IMR-90 (cell line): ENCODE measurements at regions of chr12 and their contacts with region 1.

Region 1: DNA sequence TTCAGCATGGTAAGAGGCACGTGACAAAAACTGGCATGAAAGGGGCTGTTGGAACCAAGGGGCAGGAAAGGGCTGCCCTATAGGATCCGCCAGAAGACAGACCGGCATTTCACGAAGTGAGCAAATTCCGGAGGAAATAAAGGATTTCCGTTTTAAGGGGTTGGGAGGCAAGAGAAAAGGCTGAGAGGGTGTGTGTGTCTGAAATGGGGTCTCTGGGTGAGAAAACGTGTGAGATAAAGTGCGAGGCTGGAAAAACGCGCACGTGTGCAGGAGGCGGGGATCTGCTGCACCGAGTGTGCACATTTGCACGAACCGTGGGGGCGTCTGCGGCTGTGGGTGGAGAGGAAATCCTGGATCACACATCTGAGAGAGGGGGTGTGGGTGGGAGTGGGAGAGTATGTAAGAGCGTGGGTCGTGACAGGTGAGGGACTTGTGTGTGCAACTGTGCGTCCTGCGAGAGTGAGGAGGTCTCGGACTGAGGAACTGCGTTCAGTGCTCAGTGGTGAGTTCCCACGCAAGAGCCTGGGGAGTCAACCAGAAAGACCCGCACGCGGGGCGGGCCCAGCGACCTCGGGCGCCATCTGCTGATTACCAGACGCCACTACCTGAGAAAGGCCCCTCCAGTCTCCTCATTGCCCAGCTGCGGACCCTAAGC is 37.0 kb upstream of the P2RX7 start:
- DNase-seq: peak; percentile 35
- ATAC-seq: peak; percentile 99
- H3K4me3 ChIP-seq: peak overlapping the region; percentile 24; the same call in 1 of the 2 replicates
- H3K27ac ChIP-seq: no peak overlapping the region
- H3K4me1 ChIP-seq: peaks cover 2% of the 10 kb centered on the region; the same call in 1 of the 2 replicates
- H3K27me3 ChIP-seq: peaks cover 15% of the 10 kb centered on the region
- CTCF ChIP-seq: peak; percentile 74
- POLR2A ChIP-seq: no peak
- RAD21 ChIP-seq: peak; percentile 66

Region 2: DNA sequence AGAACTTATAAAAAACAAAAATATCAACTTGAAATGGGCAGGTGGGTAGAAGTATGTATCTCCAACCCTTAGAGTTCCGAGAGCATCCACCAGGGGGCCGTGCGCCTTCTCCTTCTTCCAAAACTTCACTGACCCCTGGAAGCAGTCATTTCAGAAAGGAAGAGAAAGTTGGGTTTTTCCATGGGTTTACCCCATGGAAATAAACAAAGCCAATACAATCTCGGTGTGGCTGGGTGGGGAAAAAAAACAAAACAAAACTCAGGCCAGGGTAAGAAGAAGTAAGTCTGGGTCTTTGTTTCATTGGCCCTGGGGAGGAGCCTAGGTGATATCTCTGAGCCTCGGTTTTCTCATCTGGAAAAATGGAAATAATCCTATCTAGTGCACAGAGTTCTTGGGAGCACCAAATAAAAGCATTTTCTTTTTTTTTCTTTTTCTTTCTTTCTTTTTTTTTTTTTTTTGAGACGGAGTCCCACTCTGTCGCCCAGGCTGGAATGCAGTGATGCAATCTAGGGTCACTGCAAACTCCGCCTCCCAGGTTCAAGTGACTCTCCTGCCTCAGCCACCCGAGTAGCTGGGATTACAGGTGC is 150.9 kb before region 1 on chr12:
- CTCF ChIA-PET with region 1: no interaction called
- POLR2A ChIA-PET with region 1: no interaction called
- dilution Hi-C with region 1: no loop called
- in situ Hi-C with region 1: no loop called
- intact Hi-C with region 1: loop called (anchors 5 kb)
- DNase-seq: peak; percentile 18
- ATAC-seq: peak; percentile 71
- H3K4me3 ChIP-seq: no peak overlapping the region
- H3K27ac ChIP-seq: no peak overlapping the region
- H3K4me1 ChIP-seq: no peaks in the 10 kb centered on the region
- H3K27me3 ChIP-seq: no peaks in the 10 kb centered on the region
- CTCF ChIP-seq: peak; percentile 57
- POLR2A ChIP-seq: no peak
- RAD21 ChIP-seq: peak; percentile 49

Region 3: DNA sequence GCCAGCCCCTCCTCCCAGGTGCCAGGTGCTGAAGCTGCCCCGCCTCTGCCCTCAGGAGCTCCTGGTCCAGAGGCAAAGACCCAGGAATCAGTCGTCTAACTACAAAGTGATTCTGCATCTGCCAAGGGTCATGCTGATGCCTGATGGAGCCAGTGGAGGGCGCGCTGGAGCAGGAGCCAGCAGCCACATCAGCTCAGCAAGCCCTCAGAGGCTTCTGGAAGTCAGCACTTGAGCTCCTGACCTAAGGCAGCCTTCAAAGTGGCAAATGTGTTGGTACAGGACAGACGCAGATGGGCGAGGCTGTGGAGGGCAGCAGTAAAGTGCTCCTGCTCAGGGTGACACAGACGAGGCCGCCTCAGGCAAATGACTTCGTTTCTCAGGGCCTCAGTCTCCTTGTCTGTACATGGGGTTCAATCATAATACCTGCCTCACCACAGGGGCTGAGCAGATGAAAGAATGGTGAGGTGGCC is 90.3 kb before region 1 on chr12:
- CTCF ChIA-PET with region 1: no interaction called
- POLR2A ChIA-PET with region 1: no interaction called
- dilution Hi-C with region 1: no loop called
- in situ Hi-C with region 1: no loop called
- intact Hi-C with region 1: loop called (anchors 1 kb)
- DNase-seq: peak; percentile 23
- ATAC-seq: peak; percentile 79
- H3K4me3 ChIP-seq: no peak overlapping the region
- H3K27ac ChIP-seq: no peak overlapping the region
- H3K4me1 ChIP-seq: no peaks in the 10 kb centered on the region
- H3K27me3 ChIP-seq: no peaks in the 10 kb centered on the region
- CTCF ChIP-seq: peak; percentile 61
- POLR2A ChIP-seq: no peak
- RAD21 ChIP-seq: peak; percentile 58

Region 4: DNA sequence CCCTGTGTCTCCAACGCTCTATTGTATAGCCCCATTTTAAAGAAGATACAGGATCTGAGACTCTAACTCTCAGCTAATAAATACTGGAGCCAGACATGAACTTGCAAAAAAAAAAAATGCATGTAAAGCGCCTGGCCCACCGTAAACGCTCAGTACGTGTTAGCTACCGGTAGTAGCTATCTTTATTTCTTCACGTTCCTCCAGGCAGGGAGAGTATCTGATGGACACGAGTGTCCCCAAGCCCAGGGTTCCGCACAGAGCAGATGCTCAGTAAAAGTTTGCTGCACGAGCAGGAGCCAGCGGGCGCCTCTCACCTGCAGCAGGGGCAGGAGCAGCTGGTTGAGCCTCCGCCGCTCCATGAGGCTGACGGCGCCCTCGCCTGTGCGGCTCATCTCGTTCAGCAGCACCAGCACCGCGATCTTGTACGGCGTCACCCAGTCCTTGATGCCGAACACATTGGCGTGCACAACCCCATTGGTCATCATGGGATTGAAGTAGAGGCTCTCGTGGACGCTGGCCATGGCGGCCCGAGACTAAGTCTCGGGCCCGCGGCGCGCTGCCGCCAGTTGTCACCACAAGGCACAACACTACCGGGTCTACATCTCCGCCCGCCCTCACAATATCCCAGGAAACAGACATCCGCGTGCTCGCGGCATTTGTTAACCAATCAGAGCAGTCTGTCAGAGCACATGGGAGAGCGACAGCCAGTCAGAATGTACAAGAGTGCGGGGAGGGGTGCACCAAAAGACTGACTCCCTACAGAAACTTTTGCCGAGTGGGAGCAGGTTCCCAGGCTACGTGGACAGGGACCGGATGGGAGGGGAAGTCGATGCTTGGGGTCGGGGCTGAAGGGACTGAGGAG is 256.4 kb after region 1 on chr12 and contains the start of gene ANAPC5:
- CTCF ChIA-PET with region 1: no interaction called
- POLR2A ChIA-PET with region 1: no interaction called
- dilution Hi-C with region 1: no loop called
- in situ Hi-C with region 1: no loop called
- intact Hi-C with region 1: no loop called
- DNase-seq: peak; percentile 99
- ATAC-seq: peak; percentile 99
- H3K4me3 ChIP-seq: peak within 1 kb of the TSS; percentile 77
- H3K27ac ChIP-seq: peak within 1 kb of the TSS; percentile 78
- H3K4me1 ChIP-seq: no peaks in the 10 kb centered on the region
- H3K27me3 ChIP-seq: no peaks in the 10 kb centered on the region
- CTCF ChIP-seq: no peak
- POLR2A ChIP-seq: peak; percentile 92
- RAD21 ChIP-seq: no peak
- total RNA-seq, gene ANAPC5: 174 and 211 TPM in 2 replicates